GM23248 (cell line): ENCODE measurements at regions of chr4 and their contacts with region 1.

Region 1: GRCh38 chr4:113555868-113556267 is 205.7 kb downstream of the CAMK2D start:
- DNase-seq: no peak
- H3K4me3 ChIP-seq: no peak overlapping the region
- H3K27ac ChIP-seq: no peak overlapping the region
- H3K4me1 ChIP-seq: 0 out of 2 replicates have a peak, but pooled peaks cover 6% of the 10 kb centered on the region
- H3K27me3 ChIP-seq: no peaks in the 10 kb centered on the region

Region 2: GRCh38 chr4:112145326-112145819 is 1410.5 kb before region 1 on chr4 and contains the start of gene FAM241A:
- in situ Hi-C with region 1: no loop called
- DNase-seq: peak; percentile 94
- H3K4me3 ChIP-seq: peak within 1 kb of the TSS; percentile 100
- H3K27ac ChIP-seq: peak within 1 kb of the TSS; percentile 72
- H3K4me1 ChIP-seq: peaks cover 13% of the 10 kb centered on the region
- H3K27me3 ChIP-seq: no peaks in the 10 kb centered on the region
- total RNA-seq, gene FAM241A: 4.2 and 5.2 TPM in 2 replicates

Region 3: DNA sequence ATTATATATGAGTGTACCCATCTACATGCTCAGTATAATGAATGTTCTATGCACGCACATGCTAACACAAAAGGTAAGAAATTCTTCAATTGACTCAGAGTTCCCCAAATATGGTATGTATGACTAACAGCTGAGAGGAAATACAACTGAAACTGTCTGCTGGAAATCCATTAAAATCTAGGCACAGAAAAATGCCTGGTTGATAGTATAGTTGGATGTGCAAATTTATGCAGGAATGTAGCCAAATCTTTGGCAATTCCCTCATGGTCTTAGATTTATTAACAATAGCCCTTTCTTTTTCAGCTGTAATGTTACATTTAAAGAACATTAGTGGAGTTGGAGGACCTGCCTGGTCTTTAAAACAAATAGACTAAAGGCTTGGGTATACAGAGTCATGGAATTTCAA is 200.1 kb after region 1 on chr4:
- in situ Hi-C with region 1: loop called (anchors 10 kb)
- DNase-seq: peak; percentile 73
- H3K4me3 ChIP-seq: 0 out of 2 replicates have a peak overlapping the region, but pooled peaks have one; percentile 87
- H3K27ac ChIP-seq: peak overlapping the region; percentile 15
- H3K4me1 ChIP-seq: peaks cover 50% of the 10 kb centered on the region
- H3K27me3 ChIP-seq: no peaks in the 10 kb centered on the region